ENCODE measurements at regions of chr6 and their contacts with region 1.

Region 1: GRCh38 chr6:5471044-5471443 is 209.7 kb downstream of the FARS2 start:
- DNase-seq: peak; percentile 48 to 59
- ATAC-seq: peak; percentile 70 to 91 (median 86)
- H3K4me3 ChIP-seq: peak overlapping the region in 1 of 10 donors; percentile 18
- H3K27ac ChIP-seq: no peak overlapping the region
- H3K4me1 ChIP-seq: peaks cover 0 to 19% (median 6%) of the 10 kb centered on the region in 9 donors
- H3K27me3 ChIP-seq: no peaks in the 10 kb centered on the region
- CTCF ChIP-seq: peak; percentile 58 to 95 (median 88)

Region 2: GRCh38 chr6:5412017-5412416 is 59.0 kb before region 1 on chr6:
- intact Hi-C with region 1: no loop called
- DNase-seq: no peak
- ATAC-seq: no peak
- H3K4me3 ChIP-seq: no peak overlapping the region
- H3K27ac ChIP-seq: no peak overlapping the region
- H3K4me1 ChIP-seq: no peaks in the 10 kb centered on the region
- H3K27me3 ChIP-seq: no peaks in the 10 kb centered on the region
- CTCF ChIP-seq: no peak

Region 3: GRCh38 chr6:5990786-5991185 is 519.7 kb after region 1 on chr6:
- intact Hi-C with region 1: loop called in 2 of 10 experiments (anchors 1 to 10 kb)
- DNase-seq: no peak
- ATAC-seq: no peak
- H3K4me3 ChIP-seq: no peak overlapping the region
- H3K27ac ChIP-seq: peak overlapping the region in 1 of 10 donors; percentile 17
- H3K4me1 ChIP-seq: peaks cover 0 to 59% (median 8%) of the 10 kb centered on the region in 9 donors
- H3K27me3 ChIP-seq: peaks cover 15 to 58% (median 44%) of the 10 kb centered on the region in 7 donors
- CTCF ChIP-seq: no peak

Region 4: GRCh38 chr6:5995949-5996713 is 525.1 kb after region 1 on chr6:
- intact Hi-C with region 1: loop called in 2 of 10 experiments (anchors 1 to 10 kb)
- DNase-seq: peak; percentile 79 to 84
- ATAC-seq: peak; percentile 77 to 91 (median 87)
- H3K4me3 ChIP-seq: peak overlapping the region; percentile 32 to 69 (median 60)
- H3K27ac ChIP-seq: peak overlapping the region; percentile 3 to 90 (median 82)
- H3K4me1 ChIP-seq: peaks cover 4 to 71% (median 46%) of the 10 kb centered on the region in 9 donors
- H3K27me3 ChIP-seq: peaks cover 37 to 99% (median 90%) of the 10 kb centered on the region in 7 donors
- CTCF ChIP-seq: peak in 7 of 9 donors; percentile 20 to 53 (median 44)

Region 5: DNA sequence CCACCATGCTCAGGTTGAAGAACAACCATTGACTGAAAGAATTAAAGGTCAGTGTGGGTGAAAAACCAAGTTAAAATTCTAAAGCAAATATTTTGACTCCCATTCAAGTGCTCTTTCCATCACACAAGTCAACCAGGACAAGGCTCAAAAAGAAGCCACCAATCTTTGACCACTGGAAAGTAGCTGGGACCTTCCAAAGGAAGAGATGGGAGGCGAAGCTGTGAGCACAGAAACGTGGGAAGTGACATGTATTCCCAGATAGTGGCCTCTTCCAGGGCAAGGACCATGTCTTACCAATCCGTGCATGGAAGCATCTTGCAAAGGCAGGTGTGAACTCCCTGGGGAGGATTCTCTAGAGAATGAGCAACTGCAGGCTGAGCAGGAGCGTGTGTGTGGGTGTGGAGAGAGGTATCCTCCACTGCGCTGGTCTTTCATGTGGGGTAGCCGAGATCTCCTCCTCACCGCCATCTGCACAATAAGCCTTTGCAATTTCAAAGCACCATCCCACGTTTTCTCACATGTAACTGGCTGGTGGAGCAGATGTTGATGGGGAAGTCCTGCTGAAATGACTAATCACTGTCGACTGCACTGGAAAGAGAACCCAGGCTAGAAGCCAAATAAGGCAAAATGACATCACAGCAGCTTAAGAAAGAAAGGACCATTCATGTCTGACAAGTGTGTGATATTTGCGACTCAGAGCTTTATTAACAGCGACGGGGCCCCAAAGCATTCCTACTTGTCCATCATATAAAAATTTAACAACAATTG is 1447.4 kb after region 1 on chr6:
- intact Hi-C with region 1: no loop called
- DNase-seq: no peak
- ATAC-seq: peak in 2 of 8 donors; percentile 36 to 50
- H3K4me3 ChIP-seq: no peak overlapping the region
- H3K27ac ChIP-seq: no peak overlapping the region
- H3K4me1 ChIP-seq: peaks cover 3 to 28% (median 9%) of the 10 kb centered on the region in 9 donors
- H3K27me3 ChIP-seq: no peaks in the 10 kb centered on the region
- CTCF ChIP-seq: no peak

Measured in heart right ventricle (tissue), 16 donors.